HepG2 (cell line): ENCODE measurements at regions of chr2 and their contacts with region 1.

Region 1: GRCh38 chr2:151828143-151828889 is at the start of gene ARL5A:
- DNase-seq: peak; percentile 95
- ATAC-seq: peak; percentile 95
- H3K4me3 ChIP-seq: peak within 1 kb of the TSS; percentile 94 to 98 (median 95)
- H3K27ac ChIP-seq: peak within 1 kb of the TSS; percentile 77
- H3K4me1 ChIP-seq: peaks cover 66% of the 10 kb centered on the region
- H3K27me3 ChIP-seq: no peaks in the 10 kb centered on the region; a peak in 1 of 5 replicates
- CTCF ChIP-seq: no peak; the same call in none of the 2 replicates
- EP300 ChIP-seq: 0 out of 4 replicates have a peak, but pooled peaks of 1 of the 2 experiments have one; percentile 11
- POLR2A ChIP-seq: peak; percentile 99
- RAD21 ChIP-seq: peak; percentile 76
- total RNA-seq, gene ARL5A: 149 and 170 TPM in 2 replicates

Region 2: GRCh38 chr2:151840216-151841046 is 12.1 kb after region 1 on chr2:
- CTCF ChIA-PET with region 1: no interaction called
- POLR2A ChIA-PET with region 1: interaction called, 28 read pairs
- in situ Hi-C with region 1: no loop called
- intact Hi-C with region 1: loop called (anchors 1 kb)
- DNase-seq: no peak
- ATAC-seq: no peak
- H3K4me3 ChIP-seq: no peak overlapping the region
- H3K27ac ChIP-seq: no peak overlapping the region
- H3K4me1 ChIP-seq: peaks cover 28% of the 10 kb centered on the region
- H3K27me3 ChIP-seq: no peaks in the 10 kb centered on the region
- CTCF ChIP-seq: no peak
- EP300 ChIP-seq: no peak
- POLR2A ChIP-seq: no peak
- RAD21 ChIP-seq: no peak

Region 3: DNA sequence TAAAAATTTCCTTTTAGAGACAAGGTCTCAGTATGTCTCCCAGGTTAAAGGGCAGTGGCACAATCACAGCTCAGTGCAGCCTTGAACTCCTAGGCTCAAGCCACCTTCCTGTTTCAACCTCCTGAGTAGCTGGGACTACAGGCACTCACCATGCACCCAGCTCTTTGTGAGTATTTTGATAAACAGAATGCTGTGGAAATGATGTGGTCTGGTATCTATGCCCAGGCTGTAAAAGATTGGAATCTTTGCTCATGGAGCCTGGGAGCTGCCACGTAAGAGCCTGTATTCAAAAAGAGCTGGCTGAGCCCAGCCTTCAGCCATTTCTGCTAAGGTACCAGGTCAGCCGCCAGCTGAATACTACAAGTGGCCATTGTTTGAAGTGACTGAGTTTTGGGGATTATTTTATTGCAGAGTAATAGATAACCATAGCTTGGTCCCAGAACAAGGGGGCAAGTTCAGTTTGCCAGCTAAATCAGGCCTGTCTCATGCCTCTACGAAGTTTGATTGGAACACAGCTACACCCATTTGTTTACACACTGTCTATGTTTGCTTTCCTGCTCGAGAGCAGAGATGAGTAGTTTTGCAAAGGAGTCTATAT is 21.2 kb after region 1 on chr2:
- CTCF ChIA-PET with region 1: no interaction called
- POLR2A ChIA-PET with region 1: interaction called, 41 read pairs
- in situ Hi-C with region 1: no loop called
- intact Hi-C with region 1: no loop called
- DNase-seq: peak; percentile 78
- ATAC-seq: peak; percentile 90
- H3K4me3 ChIP-seq: peak overlapping the region in 1 of 3 experiments; percentile 35; a peak in 1 of 6 replicates
- H3K27ac ChIP-seq: peak overlapping the region; percentile 39
- H3K4me1 ChIP-seq: peaks cover 64% of the 10 kb centered on the region
- H3K27me3 ChIP-seq: no peaks in the 10 kb centered on the region
- CTCF ChIP-seq: no peak
- EP300 ChIP-seq: 0 out of 4 replicates have a peak, but pooled peaks of 1 of the 2 experiments have one; percentile 21
- POLR2A ChIP-seq: no peak
- RAD21 ChIP-seq: no peak

Region 4: DNA sequence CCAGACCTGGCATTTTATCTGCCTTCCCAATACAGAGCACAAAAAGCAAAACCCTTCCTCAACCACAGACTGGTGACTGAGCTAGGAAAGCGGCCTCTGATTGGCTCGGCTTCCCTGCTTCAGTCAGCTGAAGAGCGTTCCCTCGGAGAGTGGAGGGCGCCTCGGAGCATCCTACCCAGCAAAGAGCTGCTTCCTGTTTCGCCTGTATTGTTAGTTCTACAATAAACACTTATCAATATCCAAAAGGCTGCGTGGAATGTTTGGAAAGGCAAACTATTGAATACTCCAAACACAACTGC is 145.5 kb after region 1 on chr2:
- CTCF ChIA-PET with region 1: no interaction called
- POLR2A ChIA-PET with region 1: interaction called, 13 read pairs
- in situ Hi-C with region 1: no loop called
- intact Hi-C with region 1: no loop called
- DNase-seq: peak; percentile 66
- ATAC-seq: peak; percentile 89
- H3K4me3 ChIP-seq: peak overlapping the region; percentile 31 to 69 (median 65)
- H3K27ac ChIP-seq: peak overlapping the region; percentile 49
- H3K4me1 ChIP-seq: peaks cover 87% of the 10 kb centered on the region
- H3K27me3 ChIP-seq: no peaks in the 10 kb centered on the region
- CTCF ChIP-seq: peak; percentile 14; the same call in 1 of the 2 replicates
- EP300 ChIP-seq: no peak
- POLR2A ChIP-seq: no peak
- RAD21 ChIP-seq: no peak

Region 5: DNA sequence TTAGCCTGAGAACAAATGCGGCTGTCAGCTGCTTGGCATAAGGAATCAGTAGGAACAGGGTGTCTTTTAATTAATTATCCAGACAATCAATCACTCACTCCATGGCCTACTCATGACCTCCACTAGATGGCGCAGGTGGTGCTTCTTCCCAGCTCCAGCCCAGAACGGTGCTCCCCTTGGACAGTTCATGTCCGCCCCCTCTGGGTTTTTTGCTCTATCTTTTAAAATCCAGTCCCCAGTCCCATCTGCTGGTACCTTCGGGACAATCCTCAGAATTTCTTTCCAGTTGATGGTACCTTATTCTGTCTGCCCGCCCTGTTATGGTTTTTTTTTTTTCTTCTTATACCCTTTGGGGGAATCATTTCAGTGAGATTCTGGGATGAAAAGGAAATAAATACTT is 170.7 kb after region 1 on chr2:
- CTCF ChIA-PET with region 1: no interaction called
- POLR2A ChIA-PET with region 1: interaction called, 30 read pairs
- in situ Hi-C with region 1: no loop called
- intact Hi-C with region 1: loop called (anchors 5 kb)
- DNase-seq: peak; percentile 77
- ATAC-seq: peak; percentile 64
- H3K4me3 ChIP-seq: no peak overlapping the region
- H3K27ac ChIP-seq: no peak overlapping the region
- H3K4me1 ChIP-seq: peaks cover 55% of the 10 kb centered on the region
- H3K27me3 ChIP-seq: no peaks in the 10 kb centered on the region
- CTCF ChIP-seq: peak; percentile 85
- EP300 ChIP-seq: no peak
- POLR2A ChIP-seq: no peak
- RAD21 ChIP-seq: peak; percentile 86

Region 6: DNA sequence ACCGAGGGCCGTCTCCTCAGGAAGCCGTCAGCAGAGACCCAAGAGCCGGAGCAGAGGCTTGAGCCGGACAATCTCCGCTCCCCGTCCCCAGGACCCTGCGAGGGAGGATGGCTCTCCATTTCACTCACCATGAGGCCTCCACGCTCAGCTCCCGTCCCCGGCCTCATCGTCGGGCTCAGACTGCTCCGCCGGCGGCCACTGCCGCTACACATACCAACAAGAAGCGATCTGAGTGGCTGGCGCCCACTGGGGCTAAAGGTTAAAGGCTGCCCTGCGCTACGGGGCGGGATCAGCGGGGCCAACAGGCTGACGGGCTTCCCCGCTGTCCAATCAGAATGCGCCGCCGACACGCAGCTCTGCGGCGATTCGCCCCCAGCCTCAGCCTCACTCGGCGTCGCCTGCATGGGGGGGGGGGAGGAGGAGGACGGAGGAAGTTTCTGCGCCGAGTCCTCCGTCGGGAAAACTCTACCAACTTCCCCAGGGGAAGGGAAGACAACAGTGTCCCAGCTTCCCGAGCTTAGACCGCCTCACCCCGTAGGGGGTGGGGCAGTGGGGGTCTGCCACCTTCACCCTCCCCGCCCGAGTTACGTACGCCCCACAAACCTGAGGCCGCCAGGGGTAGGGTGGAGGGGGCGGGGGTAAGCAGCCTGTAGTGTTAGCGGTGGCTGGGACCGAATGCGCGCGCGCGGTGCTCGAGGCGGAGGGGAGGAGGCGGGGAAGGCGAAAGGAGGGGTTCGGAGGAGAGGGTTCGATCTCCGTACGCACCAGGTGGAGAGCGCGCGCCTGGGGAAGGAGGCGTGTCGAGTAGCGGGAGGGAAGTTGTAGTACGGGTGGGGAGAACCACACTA is 889.1 kb after region 1 on chr2 and contains the start of gene PRPF40A:
- CTCF ChIA-PET with region 1: no interaction called
- POLR2A ChIA-PET with region 1: interaction called, 5 read pairs
- in situ Hi-C with region 1: loop called (anchors 10 kb)
- intact Hi-C with region 1: no loop called
- DNase-seq: peak; percentile 97
- ATAC-seq: peak; percentile 82
- H3K4me3 ChIP-seq: peak within 1 kb of the TSS; percentile 75 to 96 (median 82)
- H3K27ac ChIP-seq: peak within 1 kb of the TSS; percentile 97
- H3K4me1 ChIP-seq: peaks cover 62% of the 10 kb centered on the region
- H3K27me3 ChIP-seq: no peaks in the 10 kb centered on the region; a peak in 1 of 5 replicates
- CTCF ChIP-seq: no peak
- EP300 ChIP-seq: 0 out of 4 replicates have a peak, but pooled peaks of 1 of the 2 experiments have one; percentile 17
- POLR2A ChIP-seq: peak; percentile 83 to 93
- RAD21 ChIP-seq: 0 out of 2 replicates have a peak, but pooled peaks have one; percentile 19
- total RNA-seq, gene PRPF40A: 207 and 298 TPM in 2 replicates